Esophagus muscularis mucosa (tissue), 4 donors: ENCODE measurements at regions of chr1 and their contacts with region 1.

Region 1: GRCh38 chr1:180178511-180179161 is 24.0 kb downstream of the QSOX1 start:
- DNase-seq: no peak
- H3K4me3 ChIP-seq: no peak overlapping the region
- H3K27ac ChIP-seq: no peak overlapping the region
- H3K4me1 ChIP-seq: peaks cover 11 to 18% (median 11%) of the 10 kb centered on the region in 4 donors
- H3K27me3 ChIP-seq: no peaks in the 10 kb centered on the region
- CTCF ChIP-seq: peak; percentile 90 to 99 (median 96)
- EP300 ChIP-seq: no peak
- POLR2A ChIP-seq: no peak

Region 2: DNA sequence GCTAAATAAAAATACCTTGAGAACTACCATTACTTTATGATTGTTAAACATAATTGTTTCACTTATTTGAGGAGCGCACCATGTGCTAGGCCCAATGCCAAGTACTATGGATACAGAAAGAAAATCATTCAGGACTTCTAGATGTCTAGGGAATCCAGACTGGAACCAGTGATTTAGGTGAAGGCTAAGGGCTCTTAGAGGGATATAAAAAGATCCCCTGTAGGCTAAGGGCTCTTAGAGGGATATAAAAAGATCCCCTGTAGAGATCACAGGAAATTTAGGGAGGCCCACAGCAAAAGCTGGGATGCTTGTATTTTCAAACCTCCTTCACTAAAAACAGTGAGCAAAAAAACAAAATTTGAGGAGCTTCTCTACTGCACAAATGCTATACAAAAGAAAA is 307.8 kb before region 1 on chr1:
- intact Hi-C with region 1: loop called (anchors 2 kb)
- DNase-seq: no peak
- H3K4me3 ChIP-seq: no peak overlapping the region
- H3K27ac ChIP-seq: peak overlapping the region in 1 of 4 donors; percentile 3
- H3K4me1 ChIP-seq: peaks cover 34 to 58% (median 50%) of the 10 kb centered on the region in 4 donors
- H3K27me3 ChIP-seq: no peaks in the 10 kb centered on the region
- CTCF ChIP-seq: no peak
- EP300 ChIP-seq: no peak
- POLR2A ChIP-seq: no peak

Region 3: DNA sequence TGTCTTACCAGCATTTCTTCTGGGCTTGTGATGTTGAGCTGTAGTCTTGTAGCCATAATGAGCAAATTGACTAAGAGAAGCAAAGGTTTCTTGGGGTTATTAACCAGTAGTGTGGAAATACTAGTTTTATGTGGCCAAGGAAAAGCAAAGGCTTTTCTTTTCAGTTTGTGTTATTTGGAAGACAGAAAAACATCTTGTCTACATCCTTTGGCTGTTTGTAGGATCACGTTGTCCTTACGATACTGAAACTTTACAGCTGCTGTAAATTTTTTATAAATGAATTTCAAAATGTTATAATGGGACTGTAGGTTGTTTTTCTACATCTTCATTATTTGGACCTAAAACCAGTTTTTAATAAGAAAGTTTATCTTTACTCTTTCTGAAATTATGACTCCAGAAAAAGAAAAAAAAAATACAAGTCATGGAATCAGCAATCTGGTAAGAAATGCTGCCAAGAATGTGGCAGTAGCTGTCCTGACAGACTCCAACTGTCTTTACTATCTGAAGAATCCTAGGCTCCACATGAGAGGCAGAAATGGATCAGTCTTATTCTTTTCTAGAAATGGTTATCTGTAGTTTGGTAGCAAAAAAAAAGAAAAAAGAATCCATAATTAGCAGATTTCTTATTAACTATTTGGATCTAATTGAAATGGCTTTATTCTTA is 65.5 kb before region 1 on chr1:
- intact Hi-C with region 1: loop called (anchors 2 kb)
- DNase-seq: no peak
- H3K4me3 ChIP-seq: no peak overlapping the region
- H3K27ac ChIP-seq: peak overlapping the region; percentile 34 to 56 (median 46)
- H3K4me1 ChIP-seq: peaks cover 27 to 46% (median 37%) of the 10 kb centered on the region in 4 donors
- H3K27me3 ChIP-seq: no peaks in the 10 kb centered on the region
- CTCF ChIP-seq: no peak
- EP300 ChIP-seq: no peak
- POLR2A ChIP-seq: no peak